ENCODE measurements at regions of chr2 and their contacts with region 1.

Region 1: DNA sequence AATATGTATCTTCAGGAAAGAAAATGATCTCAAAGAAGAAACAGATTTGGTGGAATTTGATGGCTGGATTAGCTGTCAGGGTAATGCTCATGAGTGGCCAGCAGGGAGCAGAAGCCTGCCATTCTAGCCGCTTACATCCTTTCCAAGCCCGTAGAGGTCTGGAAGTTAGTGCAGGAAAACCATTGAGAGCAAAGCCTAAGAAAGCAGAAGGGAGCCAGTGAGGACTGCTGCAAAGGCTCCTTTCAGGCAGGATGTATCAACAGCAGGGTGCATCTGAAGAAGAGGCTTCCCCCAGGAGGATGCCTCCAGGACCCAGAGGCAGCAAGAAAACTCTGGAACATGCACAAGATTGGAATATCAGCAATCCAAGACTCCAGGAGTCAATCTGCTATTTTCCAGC is 22.9 kb upstream of the LBH start:
- DNase-seq: peak; percentile 56
- H3K4me3 Mint-ChIP-seq: no peak overlapping the region
- H3K27ac Mint-ChIP-seq: no peak overlapping the region
- H3K4me1 Mint-ChIP-seq: no peaks in the 10 kb centered on the region
- H3K27me3 Mint-ChIP-seq: peaks cover 41% of the 10 kb centered on the region
- CTCF ChIP-seq: peak; percentile 74

Region 2: GRCh38 chr2:30165050-30165520 is 43.4 kb before region 1 on chr2:
- CTCF ChIA-PET with region 1: interaction called, 12 read pairs
- intact Hi-C with region 1: loop called (anchors 5 kb)
- DNase-seq: peak; percentile 69
- H3K4me3 Mint-ChIP-seq: no peak overlapping the region
- H3K27ac Mint-ChIP-seq: no peak overlapping the region
- H3K4me1 Mint-ChIP-seq: no peaks in the 10 kb centered on the region
- H3K27me3 Mint-ChIP-seq: peaks cover 29% of the 10 kb centered on the region
- CTCF ChIP-seq: peak; percentile 75

Region 3: GRCh38 chr2:30336978-30337841 is 128.8 kb after region 1 on chr2:
- CTCF ChIA-PET with region 1: interaction called, 6 read pairs
- intact Hi-C with region 1: loop called (anchors 10 kb)
- DNase-seq: no peak
- H3K4me3 Mint-ChIP-seq: no peak overlapping the region
- H3K27ac Mint-ChIP-seq: no peak overlapping the region
- H3K4me1 Mint-ChIP-seq: no peaks in the 10 kb centered on the region
- H3K27me3 Mint-ChIP-seq: peaks cover 24% of the 10 kb centered on the region
- CTCF ChIP-seq: no peak

Region 4: GRCh38 chr2:30611583-30611982 is 403.1 kb after region 1 on chr2:
- CTCF ChIA-PET with region 1: interaction called, 10 read pairs
- intact Hi-C with region 1: no loop called
- DNase-seq: no peak
- H3K4me3 Mint-ChIP-seq: no peak overlapping the region
- H3K27ac Mint-ChIP-seq: no peak overlapping the region
- H3K4me1 Mint-ChIP-seq: peaks cover 25% of the 10 kb centered on the region
- H3K27me3 Mint-ChIP-seq: no peaks in the 10 kb centered on the region
- CTCF ChIP-seq: no peak